HEK293 (cell line): ENCODE measurements at regions of chr12 and their contacts with region 1.

Region 1: DNA sequence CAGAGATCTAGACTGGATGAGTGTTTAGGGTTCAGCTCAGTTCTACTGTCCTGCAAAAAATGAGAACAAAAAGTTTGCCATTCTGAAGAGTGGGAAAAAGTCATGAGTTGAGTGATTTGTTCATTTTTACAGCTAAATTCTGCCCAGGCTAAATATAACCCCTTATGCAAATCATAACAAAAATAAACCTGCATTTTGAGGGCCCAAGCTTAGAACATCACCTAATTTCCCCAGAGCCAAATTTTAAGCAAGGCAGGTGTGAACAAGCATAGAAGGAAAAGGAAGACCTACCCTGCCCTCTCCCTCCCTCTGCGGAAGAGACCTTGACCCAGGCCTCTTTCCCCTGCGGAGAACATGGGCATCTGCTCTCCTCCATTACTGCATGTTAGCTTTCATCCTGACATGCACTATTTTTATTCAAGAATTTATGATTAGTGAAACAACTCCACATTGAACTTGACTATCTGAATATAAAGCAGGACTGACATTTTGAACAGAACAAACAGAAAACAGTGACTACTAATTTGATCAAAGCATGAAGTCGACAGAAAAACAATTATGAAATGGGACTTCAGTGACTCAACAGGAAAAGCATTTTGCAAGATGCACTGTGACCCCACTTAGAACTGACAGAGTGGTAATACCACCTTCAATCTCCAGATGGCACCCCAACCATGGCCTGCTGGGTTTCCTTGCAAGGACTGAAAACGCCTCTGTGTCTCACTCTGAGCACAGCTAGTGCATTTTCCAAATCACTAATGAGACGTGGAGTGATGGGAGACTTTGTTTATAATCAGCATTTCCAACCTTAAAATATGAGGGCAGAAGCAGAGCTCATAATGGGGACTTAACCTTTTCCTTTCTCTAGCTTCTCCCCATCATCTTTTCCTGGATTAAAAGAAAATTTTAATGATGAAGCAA is 30.9 kb upstream of the SELPLG start:
- H3K4me3 ChIP-seq: no peak overlapping the region
- H3K27ac ChIP-seq: no peak overlapping the region
- H3K4me1 ChIP-seq: no peaks in the 10 kb centered on the region
- CTCF ChIP-seq: peak; percentile 70

Region 2: DNA sequence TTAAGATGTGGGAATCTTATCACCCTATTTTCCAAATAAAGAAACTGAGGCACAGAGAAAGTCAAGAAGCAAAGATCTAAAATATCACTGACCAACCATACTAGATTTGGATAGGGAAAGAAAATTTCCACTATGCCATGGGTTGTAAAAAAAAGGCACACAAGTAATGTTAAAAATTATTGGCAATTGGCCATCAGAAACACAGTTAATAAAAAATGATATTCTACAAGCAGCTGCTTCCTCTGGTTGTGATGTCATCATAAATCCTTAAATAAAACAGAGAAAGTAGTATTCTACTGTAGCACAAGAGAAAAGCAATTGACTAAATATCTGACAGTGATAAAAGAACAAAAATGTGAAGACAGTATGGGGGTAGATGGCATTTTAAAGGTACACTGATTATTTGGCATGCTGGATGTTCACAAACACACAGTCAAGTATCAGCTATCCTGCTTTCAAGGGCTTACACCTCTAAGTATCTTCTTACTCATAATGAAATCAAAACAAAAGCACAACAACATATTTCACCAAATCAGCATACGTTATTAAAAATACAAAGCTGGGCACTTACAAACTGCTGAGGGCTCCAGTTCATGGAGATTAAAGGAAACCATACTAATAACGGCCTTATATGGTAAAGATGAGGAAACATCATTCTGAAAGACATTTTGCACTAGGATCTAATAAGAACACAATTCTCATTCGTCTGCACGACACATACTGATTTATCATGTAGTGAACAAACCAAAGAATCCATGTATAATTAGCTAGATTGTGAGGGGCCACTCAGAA is 21.1 kb after region 1 on chr12:
- CTCF ChIA-PET with region 1: interaction called, 18 read pairs
- POLR2A ChIA-PET with region 1: interaction called, 3 read pairs
- H3K4me3 ChIP-seq: no peak overlapping the region
- H3K27ac ChIP-seq: no peak overlapping the region
- H3K4me1 ChIP-seq: peaks cover 25% of the 10 kb centered on the region
- CTCF ChIP-seq: no peak

Region 3: DNA sequence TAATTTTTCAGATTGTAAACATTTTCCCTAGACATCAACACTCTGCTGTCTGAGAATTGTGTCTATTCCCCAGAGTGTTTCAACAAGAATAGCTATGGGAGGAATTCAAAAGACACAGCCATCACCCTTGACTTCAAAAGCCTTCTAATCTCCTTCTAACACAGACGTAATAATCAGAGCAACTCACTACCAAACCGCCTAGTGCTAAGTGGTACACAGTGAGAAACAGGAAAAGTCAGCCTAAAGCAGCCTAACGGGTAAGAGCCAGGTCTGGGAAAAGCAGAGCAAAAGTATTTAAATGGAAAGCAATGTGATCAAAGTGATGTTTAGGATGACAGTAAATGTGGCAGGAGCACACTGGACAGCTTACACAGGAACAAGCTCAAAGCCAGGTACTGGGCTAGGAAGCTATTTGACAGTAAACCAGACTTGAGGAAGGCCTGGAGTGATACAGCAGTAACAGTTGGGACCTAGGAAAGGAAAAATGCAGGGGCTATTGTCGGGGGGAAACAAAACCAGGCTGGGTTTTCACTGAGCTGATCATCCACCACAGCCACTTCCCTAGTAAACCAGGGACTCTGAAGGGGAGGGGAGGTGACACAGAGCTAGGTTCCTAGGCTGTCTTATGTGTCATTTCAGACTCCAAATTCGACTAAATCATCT is 37.3 kb after region 1 on chr12:
- CTCF ChIA-PET with region 1: interaction called, 13 read pairs
- POLR2A ChIA-PET with region 1: no interaction called
- H3K4me3 ChIP-seq: no peak overlapping the region
- H3K27ac ChIP-seq: peak overlapping the region; percentile 29; the same call in 1 of the 2 replicates
- H3K4me1 ChIP-seq: peaks cover 14% of the 10 kb centered on the region
- CTCF ChIP-seq: no peak

Region 4: DNA sequence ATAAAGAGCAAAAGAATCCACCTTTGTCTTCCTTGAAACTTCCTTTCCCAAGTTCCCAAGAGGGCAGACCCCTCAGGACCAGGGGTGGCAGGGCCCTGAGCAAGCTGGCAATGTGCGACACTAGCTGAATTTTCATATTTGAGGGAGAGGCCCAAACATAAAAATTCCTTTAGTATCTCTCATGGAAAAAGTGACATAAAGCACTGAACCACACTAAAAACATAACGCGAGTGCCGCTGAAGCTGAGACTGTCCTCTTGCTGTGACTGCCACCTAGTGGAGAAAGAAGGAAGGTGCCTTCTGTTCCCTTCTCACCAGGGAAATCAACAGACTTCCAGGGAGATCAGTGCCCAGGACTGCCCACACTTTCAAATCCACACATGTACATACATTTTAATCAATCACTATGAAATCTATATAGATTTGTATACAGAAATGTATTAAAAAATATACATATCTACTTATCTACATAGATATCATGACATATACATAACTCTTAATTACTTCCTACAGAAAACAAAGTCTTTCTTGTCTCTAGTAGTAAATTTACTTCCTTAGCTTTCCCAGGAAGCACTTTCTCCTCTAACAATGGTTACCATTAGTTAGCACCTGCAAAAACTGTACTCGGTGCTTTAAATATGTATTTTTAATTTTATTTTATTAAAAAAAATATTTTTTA is 139.0 kb after region 1 on chr12:
- CTCF ChIA-PET with region 1: interaction called, 254 read pairs
- POLR2A ChIA-PET with region 1: interaction called, 5 read pairs
- H3K4me3 ChIP-seq: no peak overlapping the region
- H3K27ac ChIP-seq: no peak overlapping the region
- H3K4me1 ChIP-seq: no peaks in the 10 kb centered on the region
- CTCF ChIP-seq: peak; percentile 61